ENCODE measurements at regions of chr19 and their contacts with region 1.

Region 1: DNA sequence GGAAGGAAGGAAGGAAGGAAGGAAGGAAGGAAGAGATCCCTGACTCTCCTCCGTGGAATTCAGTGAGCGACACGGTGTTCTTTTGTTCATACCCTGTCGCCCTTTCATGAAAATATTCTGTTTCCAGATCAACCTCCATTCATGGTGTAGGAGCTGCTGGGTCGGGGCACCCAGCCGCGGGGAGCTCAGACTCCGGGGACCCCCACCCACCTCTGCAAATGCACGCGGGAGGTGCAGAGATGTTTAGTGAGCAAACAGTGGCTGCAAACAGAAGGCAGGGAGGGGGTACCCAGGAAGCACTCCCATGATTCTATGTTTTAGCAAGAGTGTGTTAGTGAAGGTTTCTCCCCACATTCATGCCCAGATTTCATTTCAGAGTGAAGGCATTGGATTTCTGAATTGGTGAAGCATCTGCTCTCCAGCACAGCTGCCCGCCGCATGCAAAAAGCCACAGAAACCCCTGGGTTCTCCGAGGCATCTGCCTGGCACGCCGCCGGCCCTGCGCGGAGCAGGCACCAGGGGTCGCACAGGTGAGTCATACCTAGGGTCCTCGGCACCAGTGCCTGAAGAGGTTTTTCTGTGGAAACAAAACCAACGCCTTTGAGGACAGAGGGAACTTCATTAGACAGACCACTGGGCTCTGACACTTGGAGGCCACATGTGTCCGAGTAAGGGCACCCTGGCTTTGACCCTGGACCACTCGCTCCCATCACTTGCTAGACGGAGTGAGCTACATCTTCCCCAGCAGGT is 80.6 kb downstream of the ZNF557 start:
- DNase-seq: no peak
- H3K4me3 Mint-ChIP-seq: no peak overlapping the region
- H3K27ac Mint-ChIP-seq: no peak overlapping the region
- H3K4me1 Mint-ChIP-seq: no peaks in the 10 kb centered on the region
- H3K27me3 Mint-ChIP-seq: peaks cover 1% of the 10 kb centered on the region

Region 2: DNA sequence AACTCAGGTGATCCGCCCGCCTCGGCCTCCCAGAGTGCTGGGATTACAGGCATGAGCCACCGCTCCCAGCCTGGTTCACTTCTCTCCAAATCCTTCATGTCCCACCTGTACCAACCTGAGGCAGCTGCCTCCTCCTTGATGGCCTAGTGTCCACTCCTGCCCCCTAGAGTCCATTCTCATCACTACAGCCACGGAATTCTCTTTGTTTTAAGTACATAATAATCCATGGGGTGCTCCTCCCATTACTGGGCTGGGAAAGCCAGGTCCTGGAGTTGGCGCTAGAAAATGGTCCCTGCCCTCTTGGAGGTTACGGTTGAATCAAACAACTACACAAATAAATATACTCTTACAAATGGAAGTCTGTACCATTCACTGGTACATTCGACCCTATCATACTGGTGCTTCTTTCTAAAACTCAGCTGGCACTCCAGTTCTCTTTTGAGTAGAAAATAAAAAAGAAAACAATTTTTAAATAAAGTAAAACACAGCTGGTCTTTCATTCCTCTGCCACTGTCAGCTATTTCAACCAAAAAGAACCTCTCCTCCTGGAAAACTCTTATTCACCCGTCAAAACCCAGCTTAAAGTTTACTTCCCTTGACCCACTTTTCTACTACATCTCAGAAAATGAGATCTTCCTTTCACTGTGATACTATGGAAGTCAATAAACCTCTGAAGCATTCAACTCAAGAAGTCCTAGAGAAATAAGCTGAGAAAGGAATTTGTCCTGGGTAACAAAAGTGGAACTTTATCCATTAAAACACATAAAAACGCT is 176.2 kb after region 1 on chr19:
- intact Hi-C with region 1: loop called (anchors 1 kb)
- DNase-seq: no peak
- H3K4me3 Mint-ChIP-seq: no peak overlapping the region
- H3K27ac Mint-ChIP-seq: peak overlapping the region; percentile 16
- H3K4me1 Mint-ChIP-seq: no peaks in the 10 kb centered on the region
- H3K27me3 Mint-ChIP-seq: no peaks in the 10 kb centered on the region

Region 3: GRCh38 chr19:7386308-7386707 is 236.2 kb after region 1 on chr19:
- intact Hi-C with region 1: no loop called
- DNase-seq: no peak
- H3K4me3 Mint-ChIP-seq: no peak overlapping the region
- H3K27ac Mint-ChIP-seq: peak overlapping the region; percentile 78
- H3K4me1 Mint-ChIP-seq: peaks cover 4% of the 10 kb centered on the region
- H3K27me3 Mint-ChIP-seq: no peaks in the 10 kb centered on the region

Measured in activated T-helper 1 cell treated with anti-CD3 and anti-CD28 coated beads, Interleukin-12 subunit alpha, Interleukin-12 subunit beta, Interleukin-2, Interleukin-4 antibody, amounts not matched to agents 30 ng/mL and 10 ng/mL and 1 ng/mL, durations not matched to agents 14 hours and 24 hours and 36 hours (primary cell).